ENCODE measurements at regions of chr10 and their contacts with region 1.

Region 1: GRCh38 chr10:8059959-8060703 is 5.6 kb downstream of the GATA3 start:
- DNase-seq: peak in 1 of 2 donors; percentile 43
- H3K4me3 ChIP-seq: peak overlapping the region in 2 of 3 donors; percentile 72 to 87
- H3K27ac ChIP-seq: peak overlapping the region; percentile 91 to 96
- H3K4me1 ChIP-seq: no peaks in the 10 kb centered on the region
- H3K27me3 ChIP-seq: peaks cover 0 to 16% of the 10 kb centered on the region in 2 donors
- CTCF ChIP-seq: no peak
- POLR2A ChIP-seq: no peak

Region 2: GRCh38 chr10:7551950-7552716 is 508.0 kb before region 1 on chr10:
- intact Hi-C with region 1: no loop called
- DNase-seq: peak in 1 of 2 donors; percentile 30
- H3K4me3 ChIP-seq: no peak overlapping the region
- H3K27ac ChIP-seq: peak overlapping the region in 1 of 2 donors; percentile 7
- H3K4me1 ChIP-seq: no peaks in the 10 kb centered on the region
- H3K27me3 ChIP-seq: no peaks in the 10 kb centered on the region
- CTCF ChIP-seq: no peak
- POLR2A ChIP-seq: no peak

Region 3: DNA sequence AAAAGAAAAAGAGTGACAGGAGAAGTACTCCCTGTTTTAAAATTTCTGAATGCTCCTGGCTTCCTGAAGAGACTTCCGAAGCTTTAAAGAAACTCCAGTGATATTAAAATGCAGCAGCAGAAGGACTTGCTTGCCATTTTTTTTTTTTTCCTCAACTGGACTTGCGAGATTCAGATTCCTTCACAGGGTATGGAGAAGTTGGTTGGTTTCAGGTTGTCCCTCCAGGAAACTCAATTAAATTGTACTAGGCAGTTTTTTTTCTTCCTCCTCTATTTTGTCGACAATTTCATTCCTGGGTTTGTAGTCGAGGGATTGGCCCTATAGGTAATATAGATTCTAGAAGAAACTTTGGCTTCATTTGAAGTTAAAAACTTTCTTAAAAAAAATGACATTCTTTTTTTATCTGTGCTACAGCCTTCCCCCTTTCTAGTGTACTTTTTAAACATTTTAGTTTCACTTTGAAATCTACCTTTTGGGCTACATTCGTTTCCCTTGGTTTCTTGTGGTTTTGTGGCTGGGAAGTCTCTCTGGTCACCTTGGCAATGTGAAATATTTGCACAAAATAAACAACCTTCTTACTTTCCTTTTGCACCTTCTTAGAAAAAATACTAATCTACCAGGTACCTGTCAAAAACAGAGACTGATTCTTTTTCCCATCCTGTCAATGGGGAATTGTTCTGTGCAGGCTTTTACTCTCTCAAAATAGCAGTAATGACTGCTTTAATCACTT is 344.4 kb after region 1 on chr10:
- intact Hi-C with region 1: loop called (anchors 10 kb)
- DNase-seq: no peak
- H3K4me3 ChIP-seq: peak overlapping the region in 2 of 3 donors; percentile 13 to 39
- H3K27ac ChIP-seq: peak overlapping the region; percentile 63 to 77
- H3K4me1 ChIP-seq: no peaks in the 10 kb centered on the region
- H3K27me3 ChIP-seq: no peaks in the 10 kb centered on the region
- CTCF ChIP-seq: no peak
- POLR2A ChIP-seq: no peak

Region 4: GRCh38 chr10:9126728-9127127 is 1066.6 kb after region 1 on chr10:
- intact Hi-C with region 1: no loop called
- DNase-seq: no peak
- H3K4me3 ChIP-seq: no peak overlapping the region
- H3K27ac ChIP-seq: no peak overlapping the region
- H3K4me1 ChIP-seq: no peaks in the 10 kb centered on the region
- H3K27me3 ChIP-seq: no peaks in the 10 kb centered on the region
- CTCF ChIP-seq: no peak
- POLR2A ChIP-seq: no peak